CD4-positive, alpha-beta T cell (primary cell): ENCODE measurements at regions of chr17 and their contacts with region 1.

Region 1: GRCh38 chr17:10737168-10737622 is 7.4 kb upstream of the TMEM220 start:
- DNase-seq: peak; percentile 4 to 63 (median 20)
- ATAC-seq: peak; percentile 60
- H3K4me3 ChIP-seq: no peak overlapping the region
- H3K4me3 Mint-ChIP-seq: peak overlapping the region; percentile 1
- H3K27ac ChIP-seq: no peak overlapping the region
- H3K27ac Mint-ChIP-seq: no peak overlapping the region
- H3K4me1 ChIP-seq: no peaks in the 10 kb centered on the region
- H3K4me1 Mint-ChIP-seq: peaks cover 14% of the 10 kb centered on the region
- H3K27me3 ChIP-seq: no peaks in the 10 kb centered on the region
- H3K27me3 Mint-ChIP-seq: no peaks in the 10 kb centered on the region
- CTCF ChIP-seq: peak; percentile 58

Region 2: GRCh38 chr17:10844621-10845387 is 107.6 kb after region 1 on chr17:
- CTCF ChIA-PET with region 1: interaction called, 10 read pairs
- POLR2A ChIA-PET with region 1: no interaction called
- intact Hi-C with region 1: loop called (anchors 1 kb)
- DNase-seq: peak; percentile 50 to 84 (median 64)
- ATAC-seq: peak; percentile 96
- H3K4me3 ChIP-seq: peak overlapping the region; percentile 50
- H3K4me3 Mint-ChIP-seq: peak overlapping the region; percentile 70
- H3K27ac ChIP-seq: no peak overlapping the region
- H3K27ac Mint-ChIP-seq: no peak overlapping the region
- H3K4me1 ChIP-seq: peaks cover 7% of the 10 kb centered on the region
- H3K4me1 Mint-ChIP-seq: peaks cover 10% of the 10 kb centered on the region
- H3K27me3 ChIP-seq: peaks cover 0 to 4% of the 10 kb centered on the region in 2 experiments
- H3K27me3 Mint-ChIP-seq: no peaks in the 10 kb centered on the region
- CTCF ChIP-seq: peak; percentile 97

Region 3: DNA sequence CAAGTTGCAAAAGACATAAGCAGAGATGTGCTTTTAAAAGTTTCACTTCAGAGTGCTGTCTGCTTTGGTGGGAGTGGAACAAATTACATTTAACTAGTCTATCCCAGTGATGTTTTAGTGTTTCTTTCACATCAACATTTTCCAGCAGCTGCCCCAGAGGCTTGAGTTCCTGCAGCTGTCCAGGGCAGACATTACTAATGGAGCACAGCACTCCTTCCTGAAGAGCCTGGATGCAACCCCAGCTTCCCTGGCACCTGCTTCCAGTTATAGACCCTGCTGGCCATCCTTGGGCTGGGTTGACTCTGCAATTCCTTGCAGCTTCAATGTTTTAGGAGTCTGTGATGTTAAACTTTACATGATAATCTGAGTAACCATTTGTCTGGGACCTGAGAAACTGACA is 162.1 kb after region 1 on chr17:
- CTCF ChIA-PET with region 1: no interaction called
- POLR2A ChIA-PET with region 1: no interaction called
- intact Hi-C with region 1: no loop called
- DNase-seq: no peak
- ATAC-seq: no peak
- H3K4me3 ChIP-seq: no peak overlapping the region
- H3K4me3 Mint-ChIP-seq: no peak overlapping the region
- H3K27ac ChIP-seq: no peak overlapping the region
- H3K27ac Mint-ChIP-seq: no peak overlapping the region
- H3K4me1 ChIP-seq: no peaks in the 10 kb centered on the region
- H3K4me1 Mint-ChIP-seq: no peaks in the 10 kb centered on the region
- H3K27me3 ChIP-seq: no peaks in the 10 kb centered on the region
- H3K27me3 Mint-ChIP-seq: no peaks in the 10 kb centered on the region
- CTCF ChIP-seq: no peak